AG04450 (cell line): ENCODE measurements at regions of chr15 and their contacts with region 1.

Region 1: DNA sequence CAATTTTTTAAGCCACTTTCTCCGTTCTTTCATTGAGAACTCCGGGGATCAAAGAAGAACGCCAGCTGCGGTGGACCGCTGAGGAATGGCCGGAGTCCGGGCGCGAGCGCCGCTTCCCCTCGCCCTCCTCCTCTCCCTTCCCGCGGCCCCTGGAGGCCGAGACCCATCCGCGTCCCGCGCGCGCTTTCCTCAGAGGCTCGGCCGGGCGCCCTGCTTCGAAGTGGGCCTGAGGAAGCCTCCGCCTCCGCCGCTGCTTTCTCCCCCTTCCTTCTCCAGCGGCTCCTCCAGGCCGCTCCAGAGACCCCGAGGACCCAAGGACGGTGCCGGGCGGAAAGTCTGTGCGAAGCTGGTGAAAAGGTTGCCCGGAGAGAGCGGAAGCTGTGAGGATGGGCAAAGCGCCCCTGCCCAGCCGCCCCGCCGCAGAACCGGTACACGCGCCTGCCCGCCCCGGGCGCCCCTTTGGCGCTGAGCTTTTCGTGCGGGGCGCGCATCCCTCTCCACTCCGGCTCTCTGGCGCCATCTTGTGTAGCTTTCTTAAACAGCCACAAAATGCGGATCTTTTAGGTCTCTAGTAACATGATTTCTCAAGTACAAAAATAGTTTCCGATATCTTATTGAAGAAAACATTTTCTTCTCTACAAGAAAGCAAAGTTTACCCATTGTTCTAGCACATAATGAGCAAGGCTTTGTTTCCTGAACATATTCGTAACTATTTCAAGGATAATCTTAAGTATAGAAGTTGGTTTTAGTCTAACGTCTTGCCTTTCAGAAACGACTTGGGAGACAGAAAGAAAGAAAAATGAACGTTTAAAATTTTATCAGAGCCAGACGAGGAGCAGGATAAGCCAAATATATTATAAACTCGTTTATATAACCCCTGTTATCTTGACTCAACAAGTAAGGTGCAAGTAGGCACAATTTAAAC is 59.2 kb upstream of the FAM174B start:
- DNase-seq: peak; percentile 50
- H3K4me3 ChIP-seq: peak overlapping the region; percentile 64
- H3K27ac ChIP-seq: peak overlapping the region; percentile 33
- H3K27me3 ChIP-seq: no peaks in the 10 kb centered on the region
- CTCF ChIP-seq: peak; percentile 92

Region 2: GRCh38 chr15:91942676-91943576 is 771.8 kb before region 1 on chr15:
- CTCF ChIA-PET with region 1: no interaction called
- POLR2A ChIA-PET with region 1: no interaction called
- DNase-seq: peak; percentile 72
- H3K4me3 ChIP-seq: no peak overlapping the region
- H3K27ac ChIP-seq: no peak overlapping the region
- H3K27me3 ChIP-seq: no peaks in the 10 kb centered on the region
- CTCF ChIP-seq: no peak

Region 3: GRCh38 chr15:92097474-92098178 is 617.1 kb before region 1 on chr15:
- CTCF ChIA-PET with region 1: interaction called, 27 read pairs
- POLR2A ChIA-PET with region 1: no interaction called
- DNase-seq: peak; percentile 16
- H3K4me3 ChIP-seq: no peak overlapping the region
- H3K27ac ChIP-seq: no peak overlapping the region
- H3K27me3 ChIP-seq: no peaks in the 10 kb centered on the region
- CTCF ChIP-seq: peak; percentile 84

Region 4: DNA sequence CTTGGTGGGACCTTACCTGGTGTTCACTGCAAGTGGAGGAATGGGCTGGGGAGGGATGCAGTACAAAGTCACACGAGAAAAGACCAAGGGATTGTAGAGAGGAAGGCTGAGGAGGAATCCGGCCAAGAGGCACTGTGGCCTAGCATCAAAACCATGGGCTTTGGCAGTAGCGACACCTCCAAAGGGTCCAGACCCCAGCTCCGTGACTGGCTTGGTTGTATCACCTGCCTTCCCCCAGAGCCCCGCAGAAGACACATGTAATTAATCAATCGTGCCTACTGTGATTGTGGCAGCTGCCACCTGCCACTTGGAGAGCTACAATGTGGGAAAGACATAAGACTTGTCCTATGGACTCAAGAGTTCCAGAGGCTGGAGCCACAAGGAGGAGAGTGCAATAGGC is 266.4 kb before region 1 on chr15:
- CTCF ChIA-PET with region 1: no interaction called
- POLR2A ChIA-PET with region 1: no interaction called
- DNase-seq: no peak
- H3K4me3 ChIP-seq: no peak overlapping the region
- H3K27ac ChIP-seq: no peak overlapping the region
- H3K27me3 ChIP-seq: peaks cover 2% of the 10 kb centered on the region
- CTCF ChIP-seq: no peak

Region 5: DNA sequence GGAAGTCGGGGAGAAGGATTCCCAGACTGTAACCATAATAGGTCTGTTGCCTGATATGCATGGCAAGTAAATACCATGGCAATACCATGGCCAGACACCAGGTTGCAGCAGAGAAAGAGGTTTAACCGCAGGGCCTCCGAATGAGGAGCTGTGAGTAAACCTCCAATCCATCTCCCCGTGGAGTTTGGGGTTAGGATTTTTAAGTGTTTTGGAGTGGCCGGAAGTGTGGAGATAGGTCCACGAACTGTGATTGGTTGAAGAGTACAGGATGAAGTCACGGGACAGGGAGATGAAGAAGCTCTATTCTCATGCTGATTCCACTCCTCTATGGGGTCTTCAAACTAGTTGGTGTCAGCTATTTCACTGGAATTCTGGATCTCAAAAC is 193.1 kb before region 1 on chr15:
- CTCF ChIA-PET with region 1: interaction called, 96 read pairs
- POLR2A ChIA-PET with region 1: interaction called, 7 read pairs
- DNase-seq: peak; percentile 55
- H3K4me3 ChIP-seq: no peak overlapping the region
- H3K27ac ChIP-seq: no peak overlapping the region
- H3K27me3 ChIP-seq: no peaks in the 10 kb centered on the region
- CTCF ChIP-seq: peak; percentile 79

Region 6: DNA sequence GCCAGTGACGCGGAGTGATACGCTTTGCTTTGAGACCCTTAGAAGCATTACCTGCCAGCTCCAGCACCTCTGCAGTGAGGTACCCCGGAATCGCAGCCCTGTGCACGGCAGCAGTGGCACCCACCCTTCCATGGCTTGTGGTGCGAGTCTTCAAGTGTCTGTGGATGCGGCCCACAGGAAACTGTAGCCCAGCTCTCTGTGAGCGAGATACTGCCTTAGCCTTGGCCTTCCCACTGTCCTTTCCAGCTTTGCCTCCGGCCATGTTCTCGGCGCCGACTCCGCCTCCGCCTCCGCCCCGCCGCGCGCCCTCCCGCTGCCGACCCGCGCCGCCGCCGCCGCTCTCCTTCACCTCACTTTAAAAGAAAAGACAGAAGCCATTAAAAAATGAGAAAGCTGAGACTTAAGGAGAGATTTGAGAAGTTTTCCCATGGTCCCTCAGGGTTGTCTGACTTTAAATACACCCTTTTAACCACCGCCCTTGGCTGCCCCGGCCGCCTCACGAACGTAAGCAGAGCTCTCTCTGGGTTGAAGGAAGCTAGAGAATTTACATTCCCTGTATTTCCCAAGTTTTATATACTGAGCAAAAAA is 19.3 kb after region 1 on chr15:
- CTCF ChIA-PET with region 1: interaction called, 14 read pairs
- POLR2A ChIA-PET with region 1: no interaction called
- DNase-seq: no peak
- H3K4me3 ChIP-seq: peak overlapping the region; percentile 52
- H3K27ac ChIP-seq: no peak overlapping the region
- H3K27me3 ChIP-seq: no peaks in the 10 kb centered on the region
- CTCF ChIP-seq: no peak

Region 7: DNA sequence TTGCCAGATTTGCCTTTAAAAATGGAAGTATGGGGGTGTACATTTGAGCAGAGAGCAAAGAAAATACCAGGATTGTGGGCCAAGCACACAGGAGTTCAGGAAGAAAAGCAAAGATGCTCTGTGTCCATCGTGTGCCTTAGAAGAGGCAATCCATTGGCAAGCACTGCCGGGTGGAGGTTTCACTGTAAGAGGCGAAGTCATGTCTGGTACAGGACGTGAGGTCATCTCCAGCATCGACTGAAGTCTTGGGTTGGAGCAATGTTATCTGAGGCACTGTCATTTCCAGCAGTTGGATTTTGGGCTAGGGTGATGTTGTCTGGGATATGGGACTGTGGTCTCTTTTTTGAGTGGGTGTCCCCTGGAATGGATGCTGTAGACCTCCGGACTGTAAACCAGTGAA is 379.0 kb after region 1 on chr15:
- CTCF ChIA-PET with region 1: no interaction called
- POLR2A ChIA-PET with region 1: no interaction called
- DNase-seq: no peak
- H3K4me3 ChIP-seq: no peak overlapping the region
- H3K27ac ChIP-seq: no peak overlapping the region
- H3K27me3 ChIP-seq: peaks cover 26% of the 10 kb centered on the region
- CTCF ChIP-seq: no peak

Region 8: GRCh38 chr15:93358166-93359059 is 643.7 kb after region 1 on chr15:
- CTCF ChIA-PET with region 1: no interaction called
- POLR2A ChIA-PET with region 1: no interaction called
- DNase-seq: no peak
- H3K4me3 ChIP-seq: no peak overlapping the region
- H3K27ac ChIP-seq: no peak overlapping the region
- H3K27me3 ChIP-seq: no peaks in the 10 kb centered on the region
- CTCF ChIP-seq: no peak